ENCODE measurements at regions of chr10 and their contacts with region 1.

Region 1: GRCh38 chr10:132904181-132904819 is 38.1 kb downstream of the CFAP46 start:
- DNase-seq: no peak
- ATAC-seq: peak; percentile 67
- H3K4me3 Mint-ChIP-seq: no peak overlapping the region
- H3K27ac Mint-ChIP-seq: no peak overlapping the region
- H3K4me1 Mint-ChIP-seq: peaks cover 9% of the 10 kb centered on the region
- H3K27me3 Mint-ChIP-seq: peaks cover 8% of the 10 kb centered on the region
- CTCF ChIP-seq: peak; percentile 46

Region 2: DNA sequence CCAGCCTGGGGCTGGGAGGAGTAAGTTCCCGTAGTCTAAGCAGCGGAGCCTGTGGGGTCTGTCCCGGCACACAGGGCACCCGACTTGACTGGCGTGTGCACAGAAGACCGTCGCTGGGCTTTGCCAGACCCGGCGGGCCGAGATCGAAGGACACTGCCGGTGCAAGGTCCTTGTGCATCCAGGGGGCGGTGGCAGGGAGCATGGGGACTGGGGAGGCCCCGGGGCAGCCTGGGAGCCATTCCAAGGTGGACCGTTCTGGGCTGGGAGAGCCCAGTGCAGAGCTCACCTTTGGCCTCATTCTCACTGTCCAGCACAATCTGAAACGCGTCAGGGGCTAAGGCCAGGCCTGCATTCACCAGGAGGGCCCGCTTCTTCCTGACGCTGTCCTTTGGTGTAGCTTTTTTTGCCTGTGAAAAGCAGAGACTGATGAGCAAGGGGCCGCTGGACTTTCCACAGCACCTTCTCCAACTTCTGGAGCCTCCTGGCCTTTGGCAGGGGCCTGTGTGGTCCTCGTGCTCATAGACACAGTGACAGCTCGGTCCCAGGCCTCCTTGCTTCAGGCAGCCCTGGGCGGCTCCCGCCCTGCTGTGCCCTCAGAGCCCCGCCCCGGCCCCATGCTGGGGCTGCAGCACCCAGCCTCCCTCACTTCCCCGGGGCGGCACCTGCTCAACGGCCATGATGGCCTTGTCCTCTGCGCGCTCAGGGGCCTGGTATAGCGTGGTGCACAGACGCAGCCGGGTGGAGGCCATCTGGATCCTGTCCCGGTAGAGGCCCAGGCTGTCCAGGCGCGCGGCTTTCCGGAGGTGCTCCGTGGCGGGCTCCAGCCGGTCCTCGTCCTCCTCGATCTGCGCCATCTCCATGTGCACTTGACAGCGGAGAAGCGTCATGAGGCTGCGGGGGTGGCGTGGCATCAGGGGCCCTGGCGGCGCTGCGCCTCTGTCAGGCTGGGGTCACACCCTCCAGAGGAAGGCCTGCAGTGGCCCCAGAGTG is 17.8 kb after region 1 on chr10:
- CTCF ChIA-PET with region 1: no interaction called
- POLR2A ChIA-PET with region 1: no interaction called
- intact Hi-C with region 1: no loop called
- DNase-seq: no peak
- ATAC-seq: no peak
- H3K4me3 Mint-ChIP-seq: no peak overlapping the region
- H3K27ac Mint-ChIP-seq: no peak overlapping the region
- H3K4me1 Mint-ChIP-seq: peaks cover 3% of the 10 kb centered on the region
- H3K27me3 Mint-ChIP-seq: peaks cover 5% of the 10 kb centered on the region
- CTCF ChIP-seq: no peak

Region 3: DNA sequence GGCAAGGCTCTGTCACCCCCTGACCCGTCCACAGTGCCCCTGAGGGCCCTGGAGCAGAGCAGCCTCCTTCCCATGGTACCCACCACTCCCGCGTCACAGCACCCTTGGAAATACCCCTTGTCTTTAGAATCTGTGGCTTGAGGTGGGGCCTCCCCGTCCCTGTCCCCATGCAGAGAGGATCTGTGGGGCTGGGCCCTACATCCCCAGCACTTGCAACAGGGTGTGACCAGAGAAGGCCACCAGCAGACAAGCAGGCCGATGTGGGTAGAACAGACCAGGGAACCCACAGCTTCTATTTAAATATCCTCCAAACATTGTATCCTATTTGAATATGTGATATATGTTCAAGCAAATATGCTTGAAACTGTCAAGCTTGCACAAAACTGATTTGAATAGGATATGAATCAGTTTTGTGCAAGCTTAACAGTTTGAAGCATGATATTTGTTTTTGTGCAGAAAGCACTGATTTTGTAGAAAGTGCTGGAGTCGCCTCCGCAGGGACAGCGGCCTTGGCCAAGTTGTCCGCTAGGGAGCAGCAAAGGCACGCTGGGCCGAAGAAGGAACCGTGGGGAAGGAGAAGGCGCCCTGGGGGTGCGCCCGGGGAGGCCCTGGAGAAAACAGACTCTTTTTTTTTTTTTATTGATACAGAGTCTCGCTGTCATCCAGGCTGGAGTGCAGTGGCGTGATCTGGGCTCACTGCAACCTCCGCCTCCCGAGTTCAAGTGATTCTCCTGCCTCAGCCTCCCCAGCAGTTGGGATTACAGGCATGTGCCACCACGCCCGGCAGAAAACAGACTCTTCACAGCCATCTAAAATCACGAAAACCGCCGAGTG is 35.9 kb after region 1 on chr10:
- CTCF ChIA-PET with region 1: no interaction called
- POLR2A ChIA-PET with region 1: no interaction called
- intact Hi-C with region 1: loop called (anchors 1 kb)
- DNase-seq: no peak
- ATAC-seq: peak; percentile 69
- H3K4me3 Mint-ChIP-seq: peak overlapping the region; percentile 55
- H3K27ac Mint-ChIP-seq: peak overlapping the region; percentile 41
- H3K4me1 Mint-ChIP-seq: peaks cover 37% of the 10 kb centered on the region
- H3K27me3 Mint-ChIP-seq: peaks cover 38% of the 10 kb centered on the region
- CTCF ChIP-seq: no peak

Region 4: GRCh38 chr10:133144771-133145170 is 240.5 kb after region 1 on chr10:
- CTCF ChIA-PET with region 1: interaction called, 7 read pairs
- POLR2A ChIA-PET with region 1: no interaction called
- intact Hi-C with region 1: loop called (anchors 1 kb)
- DNase-seq: no peak
- ATAC-seq: no peak
- H3K4me3 Mint-ChIP-seq: no peak overlapping the region
- H3K27ac Mint-ChIP-seq: no peak overlapping the region
- H3K4me1 Mint-ChIP-seq: peaks cover 7% of the 10 kb centered on the region
- H3K27me3 Mint-ChIP-seq: peaks cover 49% of the 10 kb centered on the region
- CTCF ChIP-seq: no peak

Region 5: DNA sequence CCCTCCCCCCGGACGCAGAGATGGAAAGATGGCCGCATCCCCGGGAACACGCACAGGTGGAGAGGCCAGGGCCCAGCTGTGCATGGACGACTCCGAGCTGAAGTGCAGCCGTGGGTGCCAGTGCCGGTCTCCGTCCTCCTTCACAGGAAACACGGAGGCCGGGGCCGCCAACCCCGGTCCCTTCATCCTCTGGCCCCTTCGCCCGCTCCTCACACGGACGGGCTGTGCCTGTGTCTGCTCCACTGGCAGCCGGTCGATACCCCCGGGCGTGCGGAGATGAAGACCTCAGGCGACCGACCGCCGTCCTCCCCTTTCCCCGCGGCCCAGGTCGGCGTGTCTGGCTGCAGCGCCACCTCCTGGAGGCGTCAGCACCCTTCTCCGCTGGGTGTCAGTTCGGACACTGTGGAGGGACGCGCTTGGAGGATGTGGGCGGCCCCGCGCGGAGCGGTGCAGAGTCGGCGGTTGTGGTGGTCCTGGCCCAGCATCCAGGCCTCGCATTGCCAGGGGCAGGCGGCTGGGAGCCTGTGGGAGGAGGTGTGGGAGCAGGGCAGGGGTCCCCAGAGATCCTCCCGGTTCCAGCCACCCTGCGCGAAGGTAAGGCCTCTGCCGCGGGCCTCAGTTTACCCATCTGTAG is 414.3 kb after region 1 on chr10:
- CTCF ChIA-PET with region 1: no interaction called
- POLR2A ChIA-PET with region 1: interaction called, 6 read pairs
- intact Hi-C with region 1: loop called (anchors 1 kb)
- DNase-seq: peak; percentile 69
- ATAC-seq: peak; percentile 91
- H3K4me3 Mint-ChIP-seq: peak overlapping the region; percentile 42
- H3K27ac Mint-ChIP-seq: no peak overlapping the region
- H3K4me1 Mint-ChIP-seq: peaks cover 13% of the 10 kb centered on the region
- H3K27me3 Mint-ChIP-seq: peaks cover 24% of the 10 kb centered on the region
- CTCF ChIP-seq: peak; percentile 22